Endothelial cell of umbilical vein (primary cell): ENCODE measurements at regions of chr17 and their contacts with region 1.

Region 1: DNA sequence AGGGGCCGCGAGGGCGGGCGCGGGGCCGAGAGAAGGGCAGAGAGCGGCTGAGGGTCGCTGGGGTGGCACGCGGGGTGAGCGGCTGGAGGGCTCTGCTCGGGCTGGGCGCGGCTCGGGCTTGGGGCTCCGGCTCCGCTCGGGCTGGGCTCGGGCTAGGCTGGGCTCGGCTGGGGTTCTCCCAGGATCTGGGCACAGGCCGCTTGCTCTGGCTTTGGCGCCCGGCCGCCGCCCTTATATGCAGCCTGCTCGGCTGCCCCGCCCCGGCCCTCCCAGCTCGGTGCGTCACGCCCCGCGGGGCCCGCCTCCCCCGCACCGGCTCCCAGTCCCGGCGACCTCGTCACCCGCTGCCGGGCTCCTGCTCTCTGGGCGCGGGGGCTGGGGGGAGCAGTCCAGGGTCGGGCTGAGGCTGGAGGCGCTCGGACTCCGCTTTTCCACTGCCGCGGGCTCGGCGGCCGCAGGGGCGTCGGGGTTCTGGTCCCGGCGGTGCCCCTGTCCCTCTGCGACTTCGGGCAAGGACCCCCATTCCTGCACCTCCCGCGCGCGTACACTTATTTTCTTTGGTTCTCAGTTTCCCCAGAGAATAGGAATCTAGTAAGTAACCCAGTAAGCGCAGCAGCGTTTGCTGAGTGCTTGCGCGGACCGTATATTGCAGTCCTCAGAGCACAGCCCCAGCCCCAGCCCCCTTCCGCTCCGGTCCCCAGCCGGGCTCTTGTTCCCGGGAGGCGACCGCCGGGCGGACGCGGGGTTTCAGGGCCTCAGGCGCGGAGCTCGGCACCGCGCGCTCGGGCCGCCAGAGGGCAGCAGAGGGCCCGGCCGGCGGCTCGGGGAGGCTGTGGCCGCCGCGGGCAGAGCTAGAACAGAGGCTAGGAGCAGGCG is at the start of gene RASD1:
- DNase-seq: peak; percentile 77
- H3K4me3 ChIP-seq: peak within 1 kb of the TSS; percentile 39 to 74 (median 71)
- H3K27ac ChIP-seq: peak within 1 kb of the TSS; percentile 71
- H3K4me1 ChIP-seq: peaks cover 13% of the 10 kb centered on the region
- H3K27me3 ChIP-seq: no peaks in the 10 kb centered on the region
- CTCF ChIP-seq: peak; percentile 79 to 93
- POLR2A ChIP-seq: peak; percentile 91
- total RNA-seq, gene RASD1: 15.7 and 21.3 TPM in 2 replicates

Region 2: DNA sequence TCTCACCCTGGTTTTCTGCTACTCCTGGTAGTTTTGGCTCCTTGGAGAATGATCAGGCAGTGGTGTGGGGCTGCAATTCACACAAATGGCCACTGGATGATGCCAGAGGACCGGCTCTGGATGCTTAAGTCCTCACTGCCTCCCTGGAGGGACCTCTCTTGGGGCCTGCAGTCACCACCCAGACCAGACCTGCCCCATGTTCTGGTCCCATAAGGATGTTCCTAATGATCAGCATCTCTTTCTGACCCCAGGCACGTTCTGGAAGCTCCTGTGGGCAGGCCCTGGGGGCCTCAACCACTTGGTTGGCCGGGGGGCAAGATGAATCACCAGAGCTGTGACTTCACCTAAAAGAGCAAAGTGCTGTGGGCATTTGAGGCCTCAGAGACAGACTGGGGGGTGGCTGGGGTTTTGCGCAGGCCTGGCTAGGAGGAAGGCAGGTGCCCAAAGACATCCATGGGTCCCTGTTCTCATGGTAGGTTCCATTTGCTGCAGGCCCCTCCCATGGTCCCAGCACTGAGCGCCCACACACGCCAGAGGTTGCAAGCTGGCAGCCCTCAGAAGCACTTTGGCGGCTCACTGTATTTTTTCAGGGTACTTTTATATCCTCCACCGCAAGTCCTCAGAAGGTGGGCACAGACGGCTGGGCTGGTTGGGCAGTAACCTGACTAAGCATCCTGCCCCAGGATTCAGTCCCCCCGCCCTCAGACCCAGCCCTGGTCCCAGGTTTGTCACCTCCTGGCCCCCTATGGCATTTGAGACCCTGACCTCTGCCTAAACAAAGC is 140.1 kb before region 1 on chr17:
- CTCF ChIA-PET with region 1: interaction called, 36 read pairs
- POLR2A ChIA-PET with region 1: interaction called, 3 read pairs
- dilution Hi-C with region 1: no loop called
- intact Hi-C with region 1: loop called (anchors 1 kb)
- DNase-seq: peak; percentile 82
- H3K4me3 ChIP-seq: no peak overlapping the region
- H3K27ac ChIP-seq: no peak overlapping the region
- H3K4me1 ChIP-seq: peaks cover 14% of the 10 kb centered on the region
- H3K27me3 ChIP-seq: no peaks in the 10 kb centered on the region
- CTCF ChIP-seq: peak; percentile 99 to 100
- POLR2A ChIP-seq: no peak

Region 3: GRCh38 chr17:17416007-17416399 is 80.4 kb before region 1 on chr17:
- CTCF ChIA-PET with region 1: interaction called, 13 read pairs
- POLR2A ChIA-PET with region 1: interaction called, 7 read pairs
- dilution Hi-C with region 1: no loop called
- intact Hi-C with region 1: no loop called
- DNase-seq: peak; percentile 91
- H3K4me3 ChIP-seq: no peak overlapping the region
- H3K27ac ChIP-seq: peak overlapping the region; percentile 94
- H3K4me1 ChIP-seq: peaks cover 48% of the 10 kb centered on the region
- H3K27me3 ChIP-seq: no peaks in the 10 kb centered on the region
- CTCF ChIP-seq: no peak
- POLR2A ChIP-seq: no peak

Region 4: DNA sequence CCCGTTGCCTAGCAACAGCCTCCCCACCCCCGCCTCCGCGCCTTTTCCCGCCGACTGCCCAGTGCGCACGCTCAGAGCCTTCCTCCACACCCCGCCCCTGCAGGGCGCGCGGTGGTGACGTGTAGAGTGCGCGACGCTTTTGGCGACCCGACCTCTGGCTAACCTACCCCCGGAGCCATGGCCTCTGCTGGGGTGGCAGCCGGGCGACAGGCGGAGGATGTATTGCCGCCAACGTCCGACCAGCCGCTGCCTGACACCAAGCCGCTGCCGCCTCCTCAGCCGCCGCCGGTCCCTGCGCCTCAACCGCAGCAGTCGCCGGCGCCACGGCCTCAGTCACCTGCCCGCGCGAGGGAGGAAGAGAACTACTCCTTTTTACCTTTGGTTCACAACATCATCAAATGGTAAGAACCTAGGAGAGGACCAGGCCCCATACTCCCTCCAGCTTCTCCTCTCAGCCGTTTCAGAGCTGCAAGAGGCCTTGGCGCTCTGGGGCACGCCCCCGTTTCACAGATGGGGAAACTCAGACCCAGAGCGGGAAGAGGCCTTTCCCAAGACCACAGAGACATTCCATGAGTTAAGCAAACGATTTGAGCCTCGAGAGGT is 19.5 kb before region 1 on chr17 and contains the start of gene MED9:
- CTCF ChIA-PET with region 1: interaction called, 9 read pairs
- POLR2A ChIA-PET with region 1: no interaction called
- dilution Hi-C with region 1: no loop called
- intact Hi-C with region 1: loop called (anchors 1 kb)
- DNase-seq: peak; percentile 85
- H3K4me3 ChIP-seq: peak within 1 kb of the TSS; percentile 66 to 97 (median 78)
- H3K27ac ChIP-seq: peak within 1 kb of the TSS; percentile 69
- H3K4me1 ChIP-seq: peaks cover 10% of the 10 kb centered on the region
- H3K27me3 ChIP-seq: peaks cover 11 to 20% of the 10 kb centered on the region in 2 experiments
- CTCF ChIP-seq: no peak
- POLR2A ChIP-seq: peak; percentile 71
- total RNA-seq, gene MED9: 13.6 and 15.1 TPM in 2 replicates

Region 5: GRCh38 chr17:17511881-17512858 is 15.7 kb after region 1 on chr17:
- CTCF ChIA-PET with region 1: interaction called, 37 read pairs
- POLR2A ChIA-PET with region 1: interaction called, 3 read pairs
- dilution Hi-C with region 1: no loop called
- intact Hi-C with region 1: no loop called
- DNase-seq: no peak
- H3K4me3 ChIP-seq: no peak overlapping the region
- H3K27ac ChIP-seq: no peak overlapping the region
- H3K4me1 ChIP-seq: no peaks in the 10 kb centered on the region
- H3K27me3 ChIP-seq: no peaks in the 10 kb centered on the region
- CTCF ChIP-seq: no peak
- POLR2A ChIP-seq: no peak

Region 6: DNA sequence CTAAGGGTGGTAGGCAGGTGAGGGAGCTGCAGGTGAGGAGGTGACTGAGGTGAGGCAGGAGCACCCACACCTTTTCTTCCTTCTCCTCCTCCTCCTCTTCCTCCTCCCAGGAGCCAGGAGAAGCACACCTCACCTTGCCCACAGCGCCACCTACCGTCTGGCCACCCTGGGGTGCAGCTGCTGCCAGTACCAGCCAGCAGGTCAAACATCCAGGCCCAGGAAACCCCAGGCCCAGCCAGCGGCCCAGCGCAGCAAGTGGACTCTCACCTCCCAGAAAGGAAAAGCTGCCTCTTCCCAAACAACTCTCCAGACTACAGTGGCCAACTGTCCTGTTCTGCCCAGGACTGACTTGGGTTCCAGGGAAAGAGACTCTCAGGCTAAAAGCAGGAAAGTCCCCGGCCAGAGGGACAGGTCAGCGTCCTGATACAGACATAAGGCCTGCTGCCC is 72.3 kb after region 1 on chr17:
- CTCF ChIA-PET with region 1: interaction called, 84 read pairs
- POLR2A ChIA-PET with region 1: interaction called, 3 read pairs
- dilution Hi-C with region 1: no loop called
- intact Hi-C with region 1: loop called (anchors 1 kb)
- DNase-seq: peak; percentile 38
- H3K4me3 ChIP-seq: no peak overlapping the region
- H3K27ac ChIP-seq: no peak overlapping the region
- H3K4me1 ChIP-seq: no peaks in the 10 kb centered on the region
- H3K27me3 ChIP-seq: no peaks in the 10 kb centered on the region
- CTCF ChIP-seq: peak; percentile 85 to 89
- POLR2A ChIP-seq: no peak

Region 7: GRCh38 chr17:17603178-17603894 is 106.9 kb after region 1 on chr17:
- CTCF ChIA-PET with region 1: no interaction called
- POLR2A ChIA-PET with region 1: no interaction called
- dilution Hi-C with region 1: no loop called
- intact Hi-C with region 1: no loop called
- DNase-seq: no peak
- H3K4me3 ChIP-seq: no peak overlapping the region
- H3K27ac ChIP-seq: no peak overlapping the region
- H3K4me1 ChIP-seq: no peaks in the 10 kb centered on the region
- H3K27me3 ChIP-seq: peaks cover 0 to 2% of the 10 kb centered on the region in 2 experiments
- CTCF ChIP-seq: no peak
- POLR2A ChIP-seq: no peak

Region 8: DNA sequence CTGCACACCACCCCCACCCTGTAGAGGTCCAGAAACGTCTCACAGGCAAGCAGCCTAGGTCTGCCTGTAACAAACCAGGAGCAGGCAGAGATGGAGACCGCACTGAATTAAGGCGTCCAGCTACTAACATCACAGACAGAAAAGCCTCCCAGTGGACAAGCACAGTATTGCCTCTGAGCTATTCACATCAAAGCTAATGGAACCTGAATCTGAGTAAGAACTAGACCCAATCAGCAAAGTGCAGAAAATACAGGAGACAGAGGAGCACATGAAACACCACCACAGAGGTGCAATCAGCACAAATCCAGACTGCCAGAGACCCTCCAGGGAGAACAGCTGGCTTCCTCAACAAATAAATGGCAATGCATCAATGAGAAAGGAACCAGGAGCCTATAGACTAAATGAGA is 117.3 kb after region 1 on chr17:
- CTCF ChIA-PET with region 1: interaction called, 46 read pairs
- POLR2A ChIA-PET with region 1: interaction called, 4 read pairs
- dilution Hi-C with region 1: no loop called
- intact Hi-C with region 1: loop called (anchors 1 kb)
- DNase-seq: peak; percentile 73
- H3K4me3 ChIP-seq: no peak overlapping the region
- H3K27ac ChIP-seq: no peak overlapping the region
- H3K4me1 ChIP-seq: no peaks in the 10 kb centered on the region
- H3K27me3 ChIP-seq: peaks cover 0 to 1% of the 10 kb centered on the region in 2 experiments
- CTCF ChIP-seq: peak; percentile 66 to 78
- POLR2A ChIP-seq: no peak

Region 9: GRCh38 chr17:17698869-17699351 is 202.5 kb after region 1 on chr17:
- CTCF ChIA-PET with region 1: no interaction called
- POLR2A ChIA-PET with region 1: no interaction called
- dilution Hi-C with region 1: no loop called
- intact Hi-C with region 1: no loop called
- DNase-seq: peak; percentile 12
- H3K4me3 ChIP-seq: no peak overlapping the region
- H3K27ac ChIP-seq: no peak overlapping the region
- H3K4me1 ChIP-seq: peaks cover 20% of the 10 kb centered on the region
- H3K27me3 ChIP-seq: no peaks in the 10 kb centered on the region
- CTCF ChIP-seq: no peak
- POLR2A ChIP-seq: no peak

Region 10: GRCh38 chr17:17729620-17730249 is 233.3 kb after region 1 on chr17:
- CTCF ChIA-PET with region 1: no interaction called
- POLR2A ChIA-PET with region 1: no interaction called
- dilution Hi-C with region 1: no loop called
- intact Hi-C with region 1: no loop called
- DNase-seq: no peak
- H3K4me3 ChIP-seq: no peak overlapping the region
- H3K27ac ChIP-seq: no peak overlapping the region
- H3K4me1 ChIP-seq: peaks cover 24% of the 10 kb centered on the region
- H3K27me3 ChIP-seq: no peaks in the 10 kb centered on the region
- CTCF ChIP-seq: peak; percentile 28 to 49
- POLR2A ChIP-seq: no peak